SK-N-SH (cell line): ENCODE measurements at regions of chr3 and their contacts with region 1.

Region 1: GRCh38 chr3:119395923-119396358 is 67.5 kb downstream of the TMEM39A start:
- DNase-seq: no peak
- H3K4me3 ChIP-seq: no peak overlapping the region
- H3K27ac ChIP-seq: no peak overlapping the region; a peak in 1 of 4 replicates
- H3K4me1 ChIP-seq: no peaks in the 10 kb centered on the region; a peak in 1 of 4 replicates
- H3K27me3 ChIP-seq: no peaks in the 10 kb centered on the region
- CTCF ChIP-seq: no peak
- EP300 ChIP-seq: no peak
- RAD21 ChIP-seq: no peak

Region 2: DNA sequence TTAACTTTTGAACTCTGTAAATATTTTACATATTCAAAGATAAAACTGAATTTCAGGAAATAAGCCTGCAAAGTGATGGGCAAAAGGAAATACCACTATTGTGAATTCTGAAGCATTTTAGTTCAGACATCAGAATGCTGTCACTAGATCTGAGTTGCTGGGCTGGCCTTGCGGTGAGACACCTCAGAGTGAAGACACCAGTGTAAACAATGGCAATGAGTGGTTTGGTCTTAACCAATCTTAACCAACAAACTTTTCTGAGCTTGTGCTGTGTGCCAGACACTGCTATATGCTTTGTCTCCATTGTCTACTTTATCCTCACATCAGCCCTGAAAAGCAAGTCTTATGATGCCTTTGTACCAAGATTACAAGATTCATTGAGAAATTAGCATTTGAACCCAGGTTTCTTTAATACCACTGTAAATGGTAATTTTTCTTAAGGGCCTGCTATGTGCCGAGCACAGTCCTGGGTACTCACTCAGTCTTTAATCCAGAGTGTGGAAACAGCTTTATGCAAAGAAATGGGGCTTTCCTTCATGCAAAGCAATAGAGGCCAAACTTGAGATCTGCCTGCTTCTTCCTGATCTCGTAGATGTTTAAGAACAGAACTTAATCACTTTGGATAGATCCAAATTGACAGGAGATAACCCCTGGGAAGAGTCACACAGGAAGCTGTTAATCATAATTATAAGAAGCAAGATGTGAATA is 12.5 kb after region 1 on chr3:
- CTCF ChIA-PET with region 1: interaction called, 10 read pairs
- POLR2A ChIA-PET with region 1: no interaction called
- DNase-seq: no peak
- H3K4me3 ChIP-seq: no peak overlapping the region
- H3K27ac ChIP-seq: no peak overlapping the region
- H3K4me1 ChIP-seq: no peaks in the 10 kb centered on the region
- H3K27me3 ChIP-seq: no peaks in the 10 kb centered on the region
- CTCF ChIP-seq: no peak
- EP300 ChIP-seq: no peak
- RAD21 ChIP-seq: no peak